Esophagus squamous epithelium (tissue), 5 donors: ENCODE measurements at regions of chr13 and their contacts with region 1.

Region 1: GRCh38 chr13:44435142-44435982 is 61.7 kb downstream of the SERP2 start:
- DNase-seq: peak; percentile 77
- H3K4me3 ChIP-seq: peak overlapping the region; percentile 51 to 75 (median 70)
- H3K27ac ChIP-seq: peak overlapping the region; percentile 89 to 97 (median 92)
- H3K4me1 ChIP-seq: peaks cover 6 to 54% (median 7%) of the 10 kb centered on the region in 3 donors
- H3K27me3 ChIP-seq: no peaks in the 10 kb centered on the region
- CTCF ChIP-seq: no peak
- POLR2A ChIP-seq: peak in 3 of 4 donors; percentile 66 to 88 (median 79)

Region 2: GRCh38 chr13:43905435-43906031 is 529.8 kb before region 1 on chr13:
- intact Hi-C with region 1: loop called (anchors 5 kb)
- DNase-seq: no peak
- H3K4me3 ChIP-seq: no peak overlapping the region
- H3K27ac ChIP-seq: no peak overlapping the region
- H3K4me1 ChIP-seq: peaks cover 0 to 10% (median 0%) of the 10 kb centered on the region in 3 donors
- H3K27me3 ChIP-seq: peaks cover 0 to 3% (median 0%) of the 10 kb centered on the region in 4 donors
- CTCF ChIP-seq: peak; percentile 45 to 87 (median 78)
- POLR2A ChIP-seq: no peak

Region 3: DNA sequence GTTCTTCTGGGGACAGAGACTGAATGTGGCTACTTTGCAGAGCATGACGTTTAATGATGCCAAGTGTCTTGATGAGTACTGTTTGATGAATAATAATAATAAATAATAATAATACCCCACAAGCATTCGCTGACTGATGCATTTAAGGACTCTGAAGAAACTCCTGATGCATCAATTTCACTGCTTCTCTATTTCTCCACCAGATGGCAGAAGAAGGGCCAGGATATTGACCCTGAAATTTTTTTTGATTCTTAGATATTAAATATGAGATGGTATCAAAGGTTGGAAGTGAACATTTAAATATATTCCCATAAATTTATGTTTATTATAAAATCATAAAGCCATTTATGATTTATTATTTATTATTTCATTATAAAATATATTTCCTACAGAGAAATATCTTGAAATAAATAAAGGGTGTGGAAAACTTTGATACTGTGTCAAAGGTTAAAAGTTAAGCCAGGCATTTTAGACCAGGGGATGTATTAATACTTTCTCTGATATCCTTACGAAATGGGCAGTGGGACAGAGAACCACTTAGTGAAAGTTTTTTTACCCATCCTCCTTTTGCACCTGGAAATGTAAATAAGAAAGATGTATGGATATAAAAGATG is 384.8 kb before region 1 on chr13:
- intact Hi-C with region 1: loop called (anchors 10 kb)
- DNase-seq: no peak
- H3K4me3 ChIP-seq: no peak overlapping the region
- H3K27ac ChIP-seq: no peak overlapping the region
- H3K4me1 ChIP-seq: peaks cover 0 to 3% (median 0%) of the 10 kb centered on the region in 3 donors
- H3K27me3 ChIP-seq: peaks cover 0 to 8% (median 0%) of the 10 kb centered on the region in 4 donors
- CTCF ChIP-seq: peak; percentile 41 to 85 (median 72)
- POLR2A ChIP-seq: no peak

Region 4: GRCh38 chr13:44191504-44192171 is 243.7 kb before region 1 on chr13:
- intact Hi-C with region 1: loop called (anchors 5 kb)
- DNase-seq: no peak
- H3K4me3 ChIP-seq: peak overlapping the region in 1 of 4 donors; percentile 29
- H3K27ac ChIP-seq: peak overlapping the region in 3 of 4 donors; percentile 38 to 63 (median 56)
- H3K4me1 ChIP-seq: peaks cover 0 to 22% (median 0%) of the 10 kb centered on the region in 3 donors
- H3K27me3 ChIP-seq: no peaks in the 10 kb centered on the region
- CTCF ChIP-seq: peak; percentile 41 to 82 (median 80)
- POLR2A ChIP-seq: no peak

Region 5: GRCh38 chr13:44577236-44578066 is 142.1 kb after region 1 on chr13:
- intact Hi-C with region 1: no loop called
- DNase-seq: peak; percentile 68
- H3K4me3 ChIP-seq: peak overlapping the region; percentile 75 to 97 (median 94)
- H3K27ac ChIP-seq: peak overlapping the region; percentile 93 to 99 (median 97)
- H3K4me1 ChIP-seq: peaks cover 19 to 45% (median 27%) of the 10 kb centered on the region in 3 donors
- H3K27me3 ChIP-seq: no peaks in the 10 kb centered on the region
- CTCF ChIP-seq: peak in 2 of 6 experiments; percentile 5 to 19
- POLR2A ChIP-seq: peak in 2 of 4 donors; percentile 71 to 79

Region 6: DNA sequence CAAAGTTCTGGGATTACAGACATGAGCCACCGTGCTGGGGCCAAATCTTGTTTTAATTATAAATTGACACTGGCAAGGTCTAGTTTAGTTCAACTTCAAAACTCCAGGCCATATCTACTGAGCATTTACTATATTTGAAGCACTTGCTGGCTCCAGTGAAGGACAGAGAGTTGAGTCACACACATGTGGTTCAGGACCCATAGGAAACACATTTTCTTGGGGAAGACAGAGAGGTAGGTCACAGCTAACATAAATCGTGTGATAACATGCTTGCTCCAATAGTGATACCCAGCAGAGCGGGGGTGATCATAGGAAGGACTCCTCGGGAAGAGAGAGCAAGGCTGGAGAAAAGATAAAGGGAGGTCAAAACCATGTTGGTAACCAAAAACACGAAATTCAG is 311.3 kb after region 1 on chr13:
- intact Hi-C with region 1: no loop called
- DNase-seq: no peak
- H3K4me3 ChIP-seq: no peak overlapping the region
- H3K27ac ChIP-seq: no peak overlapping the region
- H3K4me1 ChIP-seq: peaks cover 0 to 30% (median 0%) of the 10 kb centered on the region in 3 donors
- H3K27me3 ChIP-seq: no peaks in the 10 kb centered on the region
- CTCF ChIP-seq: no peak
- POLR2A ChIP-seq: no peak

Region 7: GRCh38 chr13:44904967-44905366 is 469.6 kb after region 1 on chr13:
- intact Hi-C with region 1: no loop called
- DNase-seq: no peak
- H3K4me3 ChIP-seq: no peak overlapping the region
- H3K27ac ChIP-seq: peak overlapping the region; percentile 40 to 91 (median 82)
- H3K4me1 ChIP-seq: peaks cover 16 to 54% (median 19%) of the 10 kb centered on the region in 3 donors
- H3K27me3 ChIP-seq: no peaks in the 10 kb centered on the region
- CTCF ChIP-seq: no peak
- POLR2A ChIP-seq: no peak